ENCODE measurements at regions of chr3 and their contacts with region 1.

Region 1: GRCh38 chr3:30606301-30607031 is at the start of gene TGFBR2:
- DNase-seq: peak; percentile 100
- H3K4me3 ChIP-seq: peak within 1 kb of the TSS; percentile 57 to 99 (median 86)
- H3K27ac ChIP-seq: peak within 1 kb of the TSS; percentile 96
- H3K4me1 ChIP-seq: peaks cover 50% of the 10 kb centered on the region
- H3K27me3 ChIP-seq: no peaks in the 10 kb centered on the region
- CTCF ChIP-seq: peak; percentile 3 to 35
- POLR2A ChIP-seq: peak; percentile 79
- total RNA-seq, gene TGFBR2: 250 and 259 TPM in 2 replicates

Region 2: DNA sequence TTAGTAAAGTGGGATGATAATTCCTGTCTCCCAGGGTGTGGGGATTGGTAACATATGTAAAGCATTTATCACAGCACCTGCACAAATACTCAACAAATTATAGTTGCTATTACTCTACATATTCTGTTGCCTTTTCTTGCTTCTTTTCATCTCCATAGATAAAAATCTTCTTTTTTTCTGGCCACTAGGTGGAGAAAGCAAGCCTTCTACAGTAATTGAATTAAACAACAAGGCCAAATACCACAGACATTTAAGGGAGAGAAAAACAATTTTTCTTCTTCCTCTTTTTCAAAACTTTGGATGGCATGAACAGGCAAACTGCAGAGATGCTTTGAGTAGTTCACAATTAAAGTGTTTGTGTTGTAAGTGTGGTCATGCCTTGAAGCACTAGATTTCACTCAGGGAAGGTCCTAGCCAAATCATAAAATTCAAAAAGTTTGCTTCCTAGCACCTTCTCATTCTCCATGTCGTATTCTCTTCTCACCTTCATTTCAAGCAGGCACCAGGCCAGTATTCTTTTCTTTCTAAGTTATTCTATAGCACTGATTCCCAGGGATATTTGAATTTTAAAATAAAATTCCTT is 493.5 kb before region 1 on chr3:
- CTCF ChIA-PET with region 1: interaction called, 3 read pairs
- POLR2A ChIA-PET with region 1: no interaction called
- dilution Hi-C with region 1: no loop called
- intact Hi-C with region 1: loop called (anchors 2 kb)
- DNase-seq: peak; percentile 76
- H3K4me3 ChIP-seq: no peak overlapping the region
- H3K27ac ChIP-seq: no peak overlapping the region
- H3K4me1 ChIP-seq: no peaks in the 10 kb centered on the region
- H3K27me3 ChIP-seq: peaks cover 0 to 2% of the 10 kb centered on the region in 2 experiments
- CTCF ChIP-seq: peak; percentile 26 to 37
- POLR2A ChIP-seq: no peak

Region 3: DNA sequence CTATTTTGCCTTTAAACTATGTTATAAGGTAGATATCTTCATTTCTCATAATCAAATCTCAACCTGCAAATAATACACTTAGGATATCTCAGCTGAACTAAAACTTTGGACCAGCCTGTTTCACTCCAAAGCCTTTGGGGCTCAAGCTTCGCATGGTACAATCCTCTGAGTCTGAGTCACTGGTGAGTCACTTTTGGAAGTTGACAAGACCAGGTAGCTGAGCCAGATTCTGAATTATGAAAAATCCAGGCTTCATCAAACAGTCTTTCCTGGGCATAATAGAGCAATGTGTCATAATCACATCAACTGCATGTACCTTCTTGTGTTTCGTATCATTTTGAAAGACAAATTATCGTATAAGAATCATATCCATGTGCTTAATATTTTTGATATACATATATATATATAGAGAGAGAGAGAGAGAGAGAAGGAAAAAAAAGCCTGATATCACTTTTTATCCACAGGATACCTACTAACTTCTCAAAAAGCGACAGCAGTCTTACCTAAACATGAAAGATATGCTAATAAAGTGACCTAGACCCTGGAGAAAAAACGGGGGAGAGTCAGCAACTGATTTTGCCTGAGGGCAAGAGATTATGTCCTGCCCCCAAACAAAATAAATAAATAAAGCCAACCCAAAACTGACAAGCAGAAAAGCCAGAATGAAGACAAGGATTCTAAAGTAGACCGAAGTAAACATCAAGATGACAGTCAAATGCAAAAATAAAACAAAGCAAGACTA is 264.0 kb before region 1 on chr3:
- CTCF ChIA-PET with region 1: interaction called, 11 read pairs
- POLR2A ChIA-PET with region 1: interaction called, 5 read pairs
- dilution Hi-C with region 1: loop called (anchors 25 kb)
- intact Hi-C with region 1: loop called (anchors 1 kb)
- DNase-seq: peak; percentile 94
- H3K4me3 ChIP-seq: peak overlapping the region in 1 of 3 experiments; percentile 32
- H3K27ac ChIP-seq: peak overlapping the region; percentile 98
- H3K4me1 ChIP-seq: peaks cover 62% of the 10 kb centered on the region
- H3K27me3 ChIP-seq: no peaks in the 10 kb centered on the region
- CTCF ChIP-seq: no peak
- POLR2A ChIP-seq: no peak

Region 4: DNA sequence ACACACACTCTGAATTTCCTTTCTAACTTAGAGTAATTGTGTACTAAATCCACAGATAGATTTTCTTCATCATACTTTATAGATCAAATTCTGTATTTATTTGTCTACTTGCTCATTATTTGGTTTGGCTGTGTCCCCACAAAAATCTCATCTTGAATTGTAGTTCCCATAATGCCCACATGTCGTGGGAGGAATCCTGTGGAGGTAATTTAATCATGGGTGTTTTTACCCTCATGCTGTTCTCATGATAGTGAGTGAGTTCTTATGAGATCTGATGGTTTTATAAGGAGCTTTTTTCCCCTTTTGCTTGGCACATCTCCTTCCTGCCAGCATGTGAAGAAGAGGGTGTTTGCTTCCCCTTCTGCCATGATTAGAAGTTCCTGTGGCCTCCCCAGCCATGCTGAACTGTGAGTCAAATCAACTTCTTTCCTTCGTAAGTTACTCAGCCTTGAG is 198.3 kb before region 1 on chr3:
- CTCF ChIA-PET with region 1: no interaction called
- POLR2A ChIA-PET with region 1: no interaction called
- dilution Hi-C with region 1: no loop called
- intact Hi-C with region 1: no loop called
- DNase-seq: peak; percentile 12
- H3K4me3 ChIP-seq: no peak overlapping the region
- H3K27ac ChIP-seq: no peak overlapping the region
- H3K4me1 ChIP-seq: no peaks in the 10 kb centered on the region
- H3K27me3 ChIP-seq: no peaks in the 10 kb centered on the region
- CTCF ChIP-seq: no peak
- POLR2A ChIP-seq: no peak

Region 5: DNA sequence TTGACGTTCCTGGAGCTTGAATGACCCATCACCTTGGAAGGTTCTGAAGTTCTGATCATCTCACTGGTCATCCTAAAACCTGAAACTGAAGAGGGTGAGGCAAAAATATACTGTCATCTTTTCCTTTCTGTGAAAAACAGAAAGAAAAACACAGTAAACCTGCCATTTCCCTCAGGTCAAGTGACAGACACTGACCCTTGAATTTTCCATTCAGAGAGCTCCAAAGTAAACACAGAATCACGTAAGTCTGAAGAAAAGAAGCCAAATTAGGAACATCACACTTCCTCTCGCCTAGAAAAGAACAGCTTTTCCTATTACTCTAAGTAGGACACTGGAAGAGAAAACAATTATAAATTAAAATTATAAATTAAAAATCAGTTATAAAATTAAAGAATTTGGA is 78.7 kb before region 1 on chr3:
- CTCF ChIA-PET with region 1: interaction called, 11 read pairs
- POLR2A ChIA-PET with region 1: interaction called, 5 read pairs
- dilution Hi-C with region 1: no loop called
- intact Hi-C with region 1: no loop called
- DNase-seq: peak; percentile 96
- H3K4me3 ChIP-seq: peak overlapping the region in 1 of 3 experiments; percentile 2
- H3K27ac ChIP-seq: peak overlapping the region; percentile 90
- H3K4me1 ChIP-seq: peaks cover 28% of the 10 kb centered on the region
- H3K27me3 ChIP-seq: no peaks in the 10 kb centered on the region
- CTCF ChIP-seq: no peak
- POLR2A ChIP-seq: no peak

Region 6: DNA sequence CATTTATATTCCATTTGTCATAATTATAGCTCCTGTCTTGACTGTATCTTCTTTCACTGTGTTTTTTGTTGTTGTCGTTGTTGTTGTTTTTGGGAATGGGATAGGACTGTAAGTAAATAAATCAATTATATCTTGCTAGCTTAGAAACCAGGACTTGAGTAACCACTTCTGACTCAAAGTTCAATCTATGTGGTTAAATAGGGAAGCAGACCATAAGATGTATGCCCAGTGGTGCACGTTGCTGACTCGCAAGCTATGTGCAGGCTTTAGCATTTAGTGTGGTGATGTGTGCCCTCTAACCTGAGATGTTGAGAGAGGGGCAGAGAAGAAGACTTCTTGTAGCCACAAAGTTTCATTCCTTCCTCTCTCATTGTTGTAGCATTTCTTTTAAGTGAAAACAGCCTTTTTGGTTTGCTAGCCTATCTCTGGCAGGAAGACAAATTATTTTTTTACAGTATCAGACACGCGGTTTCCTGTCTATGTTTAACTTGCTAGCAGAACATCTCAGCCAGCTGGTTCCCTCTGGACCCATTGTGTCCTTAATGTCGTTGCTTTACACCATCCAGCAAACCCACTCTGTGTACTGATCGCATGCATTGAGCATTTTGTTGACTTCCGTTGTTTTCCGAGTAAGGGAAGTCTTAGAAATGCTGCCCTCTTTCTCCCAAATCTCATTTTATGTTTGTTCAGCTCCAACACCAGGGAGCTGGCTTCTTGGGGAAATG is 52.0 kb after region 1 on chr3:
- CTCF ChIA-PET with region 1: interaction called, 6 read pairs
- POLR2A ChIA-PET with region 1: interaction called, 5 read pairs
- dilution Hi-C with region 1: no loop called
- intact Hi-C with region 1: loop called (anchors 1 kb)
- DNase-seq: peak; percentile 95
- H3K4me3 ChIP-seq: no peak overlapping the region
- H3K27ac ChIP-seq: peak overlapping the region; percentile 98
- H3K4me1 ChIP-seq: peaks cover 100% of the 10 kb centered on the region
- H3K27me3 ChIP-seq: no peaks in the 10 kb centered on the region
- CTCF ChIP-seq: no peak
- POLR2A ChIP-seq: peak; percentile 68

Region 7: GRCh38 chr3:30751610-30752299 is 145.3 kb after region 1 on chr3:
- CTCF ChIA-PET with region 1: no interaction called
- POLR2A ChIA-PET with region 1: no interaction called
- dilution Hi-C with region 1: no loop called
- intact Hi-C with region 1: loop called (anchors 2 kb)
- DNase-seq: peak; percentile 78
- H3K4me3 ChIP-seq: no peak overlapping the region
- H3K27ac ChIP-seq: no peak overlapping the region
- H3K4me1 ChIP-seq: peaks cover 21% of the 10 kb centered on the region
- H3K27me3 ChIP-seq: no peaks in the 10 kb centered on the region
- CTCF ChIP-seq: peak; percentile 49 to 65
- POLR2A ChIP-seq: no peak

Region 8: GRCh38 chr3:30982416-30983075 is 376.1 kb after region 1 on chr3:
- CTCF ChIA-PET with region 1: no interaction called
- POLR2A ChIA-PET with region 1: no interaction called
- dilution Hi-C with region 1: no loop called
- intact Hi-C with region 1: no loop called
- DNase-seq: no peak
- H3K4me3 ChIP-seq: no peak overlapping the region
- H3K27ac ChIP-seq: no peak overlapping the region
- H3K4me1 ChIP-seq: no peaks in the 10 kb centered on the region
- H3K27me3 ChIP-seq: no peaks in the 10 kb centered on the region
- CTCF ChIP-seq: no peak
- POLR2A ChIP-seq: no peak